Sigmoid colon (tissue), 7 donors: ENCODE measurements at regions of chr1 and their contacts with region 1.

Region 1: DNA sequence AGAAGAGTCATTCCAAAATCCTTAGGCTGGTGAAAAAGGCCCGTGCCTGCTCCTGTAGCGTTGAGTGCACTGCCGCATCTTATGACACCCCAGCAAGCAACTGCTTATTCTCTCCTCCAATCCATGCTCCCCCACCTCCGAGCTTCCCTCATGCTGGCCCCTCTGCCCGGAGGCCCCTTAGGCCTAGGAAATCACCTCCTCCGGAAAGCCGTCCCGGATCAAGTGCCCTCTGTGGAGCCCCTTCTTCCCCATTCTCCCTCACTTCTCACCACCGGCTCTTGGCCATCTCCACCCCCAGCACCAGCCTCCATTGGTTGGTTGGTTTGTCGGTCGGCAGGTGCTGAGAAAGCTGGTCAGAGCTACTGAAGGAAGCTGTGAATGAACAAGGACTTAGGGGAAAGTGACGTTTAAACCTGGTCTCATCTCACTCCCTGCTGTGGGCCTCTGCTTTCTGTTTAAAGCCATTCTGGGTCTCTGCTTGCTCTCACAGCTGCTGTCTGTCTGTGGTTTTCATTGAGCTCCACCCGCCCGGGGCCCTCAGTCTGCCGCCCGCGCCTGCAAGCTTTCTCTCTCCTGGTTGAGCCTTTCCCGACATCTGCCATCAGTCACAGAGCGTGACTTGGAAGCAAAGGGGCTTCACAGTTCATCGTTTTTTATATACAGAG is 122.2 kb downstream of the KCNN3 start:
- DNase-seq: peak; percentile 92
- H3K4me3 ChIP-seq: no peak overlapping the region
- H3K27ac ChIP-seq: peak overlapping the region in 3 of 4 donors; percentile 46 to 69 (median 63)
- H3K4me1 ChIP-seq: peaks cover 0 to 47% (median 18%) of the 10 kb centered on the region in 4 donors
- H3K27me3 ChIP-seq: peaks cover 0 to 18% (median 0%) of the 10 kb centered on the region in 3 donors
- CTCF ChIP-seq: no peak
- EP300 ChIP-seq: no peak
- POLR2A ChIP-seq: no peak

Region 2: GRCh38 chr1:154837672-154838171 is 89.8 kb after region 1 on chr1:
- intact Hi-C with region 1: loop called (anchors 5 kb)
- DNase-seq: peak; percentile 97
- H3K4me3 ChIP-seq: no peak overlapping the region
- H3K27ac ChIP-seq: peak overlapping the region in 2 of 4 donors; percentile 47 to 61
- H3K4me1 ChIP-seq: peaks cover 0 to 44% (median 27%) of the 10 kb centered on the region in 4 donors
- H3K27me3 ChIP-seq: no peaks in the 10 kb centered on the region
- CTCF ChIP-seq: no peak
- EP300 ChIP-seq: no peak
- POLR2A ChIP-seq: no peak